ENCODE measurements at regions of chr11 and their contacts with region 1.

Region 1: GRCh38 chr11:34214961-34215805 is 109.8 kb downstream of the NAT10 start:
- DNase-seq: peak; percentile 74
- H3K4me3 Mint-ChIP-seq: peak overlapping the region; percentile 30
- H3K27ac Mint-ChIP-seq: peak overlapping the region; percentile 91
- H3K4me1 Mint-ChIP-seq: peaks cover 12% of the 10 kb centered on the region
- H3K27me3 Mint-ChIP-seq: peaks cover 7% of the 10 kb centered on the region

Region 2: GRCh38 chr11:34021977-34022735 is 193.0 kb before region 1 on chr11:
- intact Hi-C with region 1: no loop called
- DNase-seq: no peak
- H3K4me3 Mint-ChIP-seq: no peak overlapping the region
- H3K27ac Mint-ChIP-seq: no peak overlapping the region
- H3K4me1 Mint-ChIP-seq: no peaks in the 10 kb centered on the region
- H3K27me3 Mint-ChIP-seq: peaks cover 3% of the 10 kb centered on the region

Region 3: DNA sequence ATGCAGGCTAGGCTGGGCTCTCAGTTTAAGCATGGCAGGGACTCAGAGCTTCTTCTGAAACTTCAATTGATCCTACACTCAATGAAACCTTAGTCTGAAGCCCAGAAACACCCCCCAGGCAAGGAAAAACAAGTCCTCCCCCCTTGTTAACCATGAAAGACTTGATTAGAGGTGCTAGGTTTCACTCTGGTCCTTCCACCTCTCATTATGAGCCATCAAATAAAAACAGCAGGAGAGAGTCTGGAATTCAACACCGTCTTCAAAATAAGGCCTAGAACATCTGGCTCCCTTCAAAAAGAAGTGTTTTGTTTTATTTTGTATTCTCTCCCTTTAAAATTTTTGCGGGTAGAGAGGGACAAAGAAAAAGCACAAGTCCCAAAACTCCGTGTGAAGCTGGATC is 14.1 kb before region 1 on chr11:
- intact Hi-C with region 1: loop called (anchors 2 kb)
- DNase-seq: no peak
- H3K4me3 Mint-ChIP-seq: no peak overlapping the region
- H3K27ac Mint-ChIP-seq: no peak overlapping the region
- H3K4me1 Mint-ChIP-seq: peaks cover 32% of the 10 kb centered on the region
- H3K27me3 Mint-ChIP-seq: no peaks in the 10 kb centered on the region

Region 4: GRCh38 chr11:34250732-34251639 is 35.8 kb after region 1 on chr11:
- intact Hi-C with region 1: no loop called
- DNase-seq: peak; percentile 86
- H3K4me3 Mint-ChIP-seq: peak overlapping the region; percentile 56
- H3K27ac Mint-ChIP-seq: peak overlapping the region; percentile 49
- H3K4me1 Mint-ChIP-seq: peaks cover 63% of the 10 kb centered on the region
- H3K27me3 Mint-ChIP-seq: peaks cover 16% of the 10 kb centered on the region

Region 5: GRCh38 chr11:34585735-34586487 is 370.7 kb after region 1 on chr11:
- intact Hi-C with region 1: no loop called
- DNase-seq: peak; percentile 57
- H3K4me3 Mint-ChIP-seq: no peak overlapping the region
- H3K27ac Mint-ChIP-seq: no peak overlapping the region
- H3K4me1 Mint-ChIP-seq: no peaks in the 10 kb centered on the region
- H3K27me3 Mint-ChIP-seq: peaks cover 40% of the 10 kb centered on the region